ENCODE measurements at regions of chr12 and their contacts with region 1.

Region 1: GRCh38 chr12:3299929-3300832 is 190.8 kb upstream of the PRMT8 start:
- DNase-seq: peak; percentile 89
- ATAC-seq: peak; percentile 90
- H3K4me3 ChIP-seq: peak overlapping the region in 3 of 5 experiments; percentile 35 to 50 (median 39)
- H3K4me3 Mint-ChIP-seq: peak overlapping the region; percentile 79
- H3K27ac ChIP-seq: no peak overlapping the region
- H3K27ac Mint-ChIP-seq: peak overlapping the region; percentile 67
- H3K4me1 ChIP-seq: peaks cover 9 to 16% of the 10 kb centered on the region in 2 donors
- H3K4me1 Mint-ChIP-seq: peaks cover 13% of the 10 kb centered on the region
- H3K27me3 ChIP-seq: peaks cover 0 to 18% (median 0%) of the 10 kb centered on the region in 4 experiments
- H3K27me3 Mint-ChIP-seq: peaks cover 19% of the 10 kb centered on the region
- CTCF ChIP-seq: peak; percentile 81

Region 2: GRCh38 chr12:3148366-3149000 is 151.7 kb before region 1 on chr12:
- CTCF ChIA-PET with region 1: no interaction called
- POLR2A ChIA-PET with region 1: no interaction called
- intact Hi-C with region 1: no loop called
- DNase-seq: no peak
- ATAC-seq: no peak
- H3K4me3 ChIP-seq: no peak overlapping the region
- H3K4me3 Mint-ChIP-seq: no peak overlapping the region
- H3K27ac ChIP-seq: no peak overlapping the region
- H3K27ac Mint-ChIP-seq: no peak overlapping the region
- H3K4me1 ChIP-seq: no peaks in the 10 kb centered on the region
- H3K4me1 Mint-ChIP-seq: no peaks in the 10 kb centered on the region
- H3K27me3 ChIP-seq: peaks cover 0 to 3% (median 0%) of the 10 kb centered on the region in 4 experiments
- H3K27me3 Mint-ChIP-seq: peaks cover 38% of the 10 kb centered on the region
- CTCF ChIP-seq: no peak

Region 3: GRCh38 chr12:3288690-3289089 is 11.5 kb before region 1 on chr12:
- CTCF ChIA-PET with region 1: interaction called, 25 read pairs
- POLR2A ChIA-PET with region 1: no interaction called
- intact Hi-C with region 1: no loop called
- DNase-seq: no peak
- ATAC-seq: no peak
- H3K4me3 ChIP-seq: no peak overlapping the region
- H3K4me3 Mint-ChIP-seq: no peak overlapping the region
- H3K27ac ChIP-seq: no peak overlapping the region
- H3K27ac Mint-ChIP-seq: no peak overlapping the region
- H3K4me1 ChIP-seq: no peaks in the 10 kb centered on the region
- H3K4me1 Mint-ChIP-seq: no peaks in the 10 kb centered on the region
- H3K27me3 ChIP-seq: peaks cover 0 to 2% (median 0%) of the 10 kb centered on the region in 4 experiments
- H3K27me3 Mint-ChIP-seq: peaks cover 11% of the 10 kb centered on the region
- CTCF ChIP-seq: no peak

Region 4: DNA sequence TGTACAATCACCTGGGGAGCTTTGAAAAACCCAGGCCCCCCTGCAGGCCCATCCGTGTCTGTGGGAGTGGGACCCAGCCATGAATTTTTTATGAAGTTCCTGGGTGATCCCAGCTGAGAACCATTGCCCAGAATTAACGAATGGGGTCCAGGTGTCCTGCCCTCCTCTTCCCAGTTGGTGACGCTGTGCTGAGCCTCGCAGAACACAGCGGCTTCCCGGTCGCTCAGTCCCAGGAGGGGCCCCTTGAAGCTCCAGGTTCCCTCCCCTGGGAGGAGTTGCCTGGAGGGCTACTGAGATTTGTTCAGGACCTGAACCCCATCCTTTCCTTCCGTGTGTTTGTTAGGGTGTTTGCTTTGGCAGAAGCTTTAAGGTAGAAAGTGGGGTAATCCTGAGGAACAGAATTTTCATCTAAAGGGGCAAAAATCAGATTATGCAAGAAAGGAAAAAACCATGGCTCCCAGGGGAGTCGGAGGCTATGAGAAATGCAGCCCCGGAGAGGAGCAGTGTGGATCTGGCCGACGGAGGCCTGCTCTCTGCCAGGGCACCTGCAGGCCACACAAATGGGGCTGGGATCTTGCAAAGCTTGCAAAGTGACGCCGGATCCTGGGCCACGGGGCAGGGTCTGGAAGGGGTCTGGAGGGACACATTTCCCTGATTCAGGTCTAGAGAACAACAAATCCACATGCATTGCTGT is 26.1 kb after region 1 on chr12:
- CTCF ChIA-PET with region 1: interaction called, 11 read pairs
- POLR2A ChIA-PET with region 1: no interaction called
- intact Hi-C with region 1: no loop called
- DNase-seq: no peak
- ATAC-seq: no peak
- H3K4me3 ChIP-seq: no peak overlapping the region
- H3K4me3 Mint-ChIP-seq: no peak overlapping the region
- H3K27ac ChIP-seq: no peak overlapping the region
- H3K27ac Mint-ChIP-seq: no peak overlapping the region
- H3K4me1 ChIP-seq: no peaks in the 10 kb centered on the region
- H3K4me1 Mint-ChIP-seq: no peaks in the 10 kb centered on the region
- H3K27me3 ChIP-seq: no peaks in the 10 kb centered on the region
- H3K27me3 Mint-ChIP-seq: peaks cover 9% of the 10 kb centered on the region
- CTCF ChIP-seq: no peak

Region 5: DNA sequence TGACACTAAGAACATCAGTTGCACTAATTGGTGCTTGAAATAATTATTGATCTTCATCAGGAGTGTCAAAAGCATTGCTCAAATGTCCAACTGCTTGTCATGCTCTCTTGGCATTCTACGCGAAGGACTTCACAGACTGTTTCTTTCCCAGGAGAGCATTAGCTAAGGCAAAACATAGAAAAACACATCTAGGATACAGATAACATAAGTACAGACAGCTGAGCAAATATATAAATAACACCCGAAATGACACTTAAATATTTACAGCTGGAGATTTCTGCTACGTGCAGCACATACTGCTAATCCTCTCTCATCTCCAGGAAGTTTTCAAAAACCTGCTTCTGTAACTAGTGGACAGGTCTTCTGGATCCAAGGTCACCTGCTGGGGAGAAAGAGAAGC is 70.8 kb after region 1 on chr12:
- CTCF ChIA-PET with region 1: no interaction called
- POLR2A ChIA-PET with region 1: no interaction called
- intact Hi-C with region 1: no loop called
- DNase-seq: no peak
- ATAC-seq: no peak
- H3K4me3 ChIP-seq: no peak overlapping the region
- H3K4me3 Mint-ChIP-seq: no peak overlapping the region
- H3K27ac ChIP-seq: no peak overlapping the region
- H3K27ac Mint-ChIP-seq: no peak overlapping the region
- H3K4me1 ChIP-seq: no peaks in the 10 kb centered on the region
- H3K4me1 Mint-ChIP-seq: no peaks in the 10 kb centered on the region
- H3K27me3 ChIP-seq: peaks cover 0 to 16% (median 12%) of the 10 kb centered on the region in 4 experiments
- H3K27me3 Mint-ChIP-seq: no peaks in the 10 kb centered on the region
- CTCF ChIP-seq: no peak

Region 6: DNA sequence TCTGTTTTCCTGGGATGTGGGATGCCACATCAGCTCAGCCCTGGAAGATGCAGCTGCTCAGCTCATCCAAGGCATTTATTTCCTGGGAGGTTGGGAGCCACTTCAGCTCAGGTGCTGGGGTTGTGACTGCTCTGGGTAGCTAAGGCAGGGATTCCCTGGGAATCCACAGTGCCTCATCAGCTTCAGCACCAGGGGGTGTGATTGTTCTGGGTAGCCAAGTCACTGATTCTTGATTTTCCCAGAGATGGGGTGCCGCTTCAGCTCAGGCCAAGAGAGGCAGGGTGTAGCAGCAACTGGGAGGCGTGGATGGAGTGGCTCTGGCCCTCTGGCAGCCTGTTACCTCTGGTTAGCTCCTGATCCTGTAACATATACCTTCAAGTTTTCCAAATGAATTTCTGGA is 109.5 kb after region 1 on chr12:
- CTCF ChIA-PET with region 1: no interaction called
- POLR2A ChIA-PET with region 1: no interaction called
- intact Hi-C with region 1: no loop called
- DNase-seq: no peak
- ATAC-seq: no peak
- H3K4me3 ChIP-seq: no peak overlapping the region
- H3K4me3 Mint-ChIP-seq: no peak overlapping the region
- H3K27ac ChIP-seq: no peak overlapping the region
- H3K27ac Mint-ChIP-seq: no peak overlapping the region
- H3K4me1 ChIP-seq: no peaks in the 10 kb centered on the region
- H3K4me1 Mint-ChIP-seq: no peaks in the 10 kb centered on the region
- H3K27me3 ChIP-seq: no peaks in the 10 kb centered on the region
- H3K27me3 Mint-ChIP-seq: peaks cover 12% of the 10 kb centered on the region
- CTCF ChIP-seq: no peak

Region 7: GRCh38 chr12:3777206-3777809 is 477.1 kb after region 1 on chr12:
- CTCF ChIA-PET with region 1: interaction called, 35 read pairs
- POLR2A ChIA-PET with region 1: no interaction called
- intact Hi-C with region 1: no loop called
- DNase-seq: peak; percentile 52
- ATAC-seq: no peak
- H3K4me3 ChIP-seq: no peak overlapping the region
- H3K4me3 Mint-ChIP-seq: no peak overlapping the region
- H3K27ac ChIP-seq: no peak overlapping the region
- H3K27ac Mint-ChIP-seq: no peak overlapping the region
- H3K4me1 ChIP-seq: no peaks in the 10 kb centered on the region
- H3K4me1 Mint-ChIP-seq: no peaks in the 10 kb centered on the region
- H3K27me3 ChIP-seq: peaks cover 0 to 2% (median 0%) of the 10 kb centered on the region in 4 experiments
- H3K27me3 Mint-ChIP-seq: no peaks in the 10 kb centered on the region
- CTCF ChIP-seq: peak; percentile 71

Region 8: DNA sequence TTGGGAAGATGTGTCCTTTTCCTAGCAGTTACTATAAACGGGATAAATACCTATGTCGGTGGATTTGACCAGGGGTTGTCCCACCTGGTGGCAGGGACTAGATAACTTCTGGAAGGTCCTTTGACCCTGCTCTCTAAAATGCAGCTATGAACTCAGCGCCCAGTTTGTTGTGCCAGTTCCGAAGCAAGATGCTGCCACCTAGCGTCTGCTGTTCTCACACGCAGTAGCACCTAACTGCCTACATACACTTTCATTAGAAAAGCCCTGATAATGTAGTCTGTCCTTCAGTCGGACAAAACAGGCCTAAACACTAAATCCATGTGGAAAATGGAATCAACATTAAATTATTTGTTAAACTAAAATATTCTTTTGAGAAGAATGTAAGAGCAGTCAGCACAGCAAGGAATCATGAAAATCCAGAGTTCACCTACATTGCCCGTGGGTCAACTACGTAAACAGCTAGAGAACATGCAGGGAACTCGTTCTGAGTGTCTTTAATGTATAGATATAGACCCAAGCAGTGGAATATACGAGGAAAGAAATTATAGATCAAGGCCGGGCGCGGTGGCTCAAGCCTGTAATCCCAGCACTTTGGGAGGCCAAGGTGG is 503.8 kb after region 1 on chr12:
- CTCF ChIA-PET with region 1: interaction called, 134 read pairs
- POLR2A ChIA-PET with region 1: interaction called, 6 read pairs
- intact Hi-C with region 1: no loop called
- DNase-seq: peak; percentile 75
- ATAC-seq: peak; percentile 68
- H3K4me3 ChIP-seq: no peak overlapping the region
- H3K4me3 Mint-ChIP-seq: no peak overlapping the region
- H3K27ac ChIP-seq: no peak overlapping the region
- H3K27ac Mint-ChIP-seq: no peak overlapping the region
- H3K4me1 ChIP-seq: no peaks in the 10 kb centered on the region
- H3K4me1 Mint-ChIP-seq: no peaks in the 10 kb centered on the region
- H3K27me3 ChIP-seq: no peaks in the 10 kb centered on the region
- H3K27me3 Mint-ChIP-seq: no peaks in the 10 kb centered on the region
- CTCF ChIP-seq: peak; percentile 90